MCF 10A (cell line): ENCODE measurements at regions of chr2 and their contacts with region 1.

Region 1: DNA sequence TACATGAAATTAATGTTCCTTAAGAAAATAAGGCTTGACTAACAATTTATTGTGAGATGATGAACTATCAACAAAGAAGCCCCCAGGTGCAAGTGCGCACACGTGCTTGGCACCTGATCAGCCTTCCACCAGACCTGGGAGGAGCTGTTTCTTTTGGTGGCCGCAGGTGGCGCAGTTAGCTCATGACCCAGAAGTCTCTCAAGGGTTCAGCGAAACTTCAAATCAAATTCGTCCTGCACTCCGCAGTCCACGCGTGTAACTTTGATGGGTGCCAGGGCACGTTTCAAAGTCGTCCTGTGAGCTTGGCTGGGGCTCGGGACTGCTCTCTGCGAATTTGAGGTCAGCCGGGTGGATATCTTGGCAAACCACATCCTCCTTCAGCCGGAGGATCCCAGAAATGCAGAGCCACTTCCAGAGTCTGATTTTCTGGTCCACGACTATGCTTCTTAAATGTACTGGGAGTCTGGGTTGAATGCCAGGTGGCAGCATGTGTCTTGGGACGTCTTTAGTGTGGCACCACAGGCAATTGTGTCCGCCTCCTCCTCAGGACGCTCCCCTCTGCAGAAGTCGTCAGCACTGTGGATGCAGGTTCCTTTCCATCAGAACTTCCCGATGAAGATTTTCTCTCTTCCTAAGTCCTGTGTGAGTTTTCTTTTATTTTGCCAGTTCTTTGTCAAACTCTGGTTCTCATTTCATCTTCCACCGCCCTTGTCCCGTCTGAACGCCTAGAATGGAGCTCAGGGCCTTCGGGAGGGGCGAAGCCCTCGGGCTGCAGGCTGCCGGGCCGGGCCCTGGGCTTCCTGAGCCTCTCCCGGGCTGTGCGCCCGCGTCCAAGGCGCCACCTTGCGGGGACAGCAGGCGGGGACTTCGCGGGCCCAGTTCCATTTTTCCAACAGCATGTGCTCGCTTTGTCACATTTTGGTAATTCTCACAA is 61.3 kb upstream of the RAPGEF4 start:
- DNase-seq: no peak
- H3K4me3 Mint-ChIP-seq: no peak overlapping the region
- H3K27ac Mint-ChIP-seq: no peak overlapping the region
- H3K4me1 Mint-ChIP-seq: peaks cover 39% of the 10 kb centered on the region
- H3K27me3 Mint-ChIP-seq: no peaks in the 10 kb centered on the region
- CTCF ChIP-seq: no peak

Region 2: GRCh38 chr2:172358691-172359556 is 315.4 kb before region 1 on chr2:
- CTCF ChIA-PET with region 1: no interaction called
- POLR2A ChIA-PET with region 1: no interaction called
- intact Hi-C with region 1: no loop called
- DNase-seq: no peak
- H3K4me3 Mint-ChIP-seq: no peak overlapping the region
- H3K27ac Mint-ChIP-seq: no peak overlapping the region
- H3K4me1 Mint-ChIP-seq: no peaks in the 10 kb centered on the region
- H3K27me3 Mint-ChIP-seq: no peaks in the 10 kb centered on the region
- CTCF ChIP-seq: no peak

Region 3: DNA sequence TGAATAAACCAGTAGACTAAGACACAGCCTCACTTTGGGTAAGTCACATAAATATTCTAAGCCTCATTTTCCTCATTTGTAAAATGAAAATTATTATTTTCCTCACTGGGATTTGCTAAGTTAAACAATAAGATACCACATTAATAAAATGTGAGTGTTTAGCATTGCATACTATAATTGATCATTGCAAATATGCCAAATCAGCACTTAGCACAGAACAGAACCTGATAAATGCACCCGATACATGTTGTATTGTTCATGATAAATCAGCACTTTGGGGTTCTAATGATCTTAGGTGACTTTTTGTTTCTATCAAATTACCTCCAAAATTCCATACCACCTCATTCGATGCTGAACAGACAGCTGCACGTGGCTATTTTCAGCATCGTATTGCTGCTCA is 11.2 kb after region 1 on chr2:
- CTCF ChIA-PET with region 1: interaction called, 3 read pairs
- POLR2A ChIA-PET with region 1: interaction called, 15 read pairs
- intact Hi-C with region 1: no loop called
- DNase-seq: no peak
- H3K4me3 Mint-ChIP-seq: no peak overlapping the region
- H3K27ac Mint-ChIP-seq: no peak overlapping the region
- H3K4me1 Mint-ChIP-seq: no peaks in the 10 kb centered on the region
- H3K27me3 Mint-ChIP-seq: no peaks in the 10 kb centered on the region
- CTCF ChIP-seq: no peak

Region 4: GRCh38 chr2:172693037-172693436 is 18.7 kb after region 1 on chr2:
- CTCF ChIA-PET with region 1: interaction called, 4 read pairs
- POLR2A ChIA-PET with region 1: interaction called, 39 read pairs
- intact Hi-C with region 1: no loop called
- DNase-seq: peak; percentile 98
- H3K4me3 Mint-ChIP-seq: no peak overlapping the region
- H3K27ac Mint-ChIP-seq: peak overlapping the region; percentile 79
- H3K4me1 Mint-ChIP-seq: peaks cover 22% of the 10 kb centered on the region
- H3K27me3 Mint-ChIP-seq: no peaks in the 10 kb centered on the region
- CTCF ChIP-seq: no peak